Mucosa of descending colon (tissue), 3 donors: ENCODE measurements at regions of chr12 and their contacts with region 1.

Region 1: GRCh38 chr12:4763549-4763948 is 43.3 kb downstream of the GALNT8 start:
- DNase-seq: peak in 2 of 3 donors; percentile 62 to 67
- ATAC-seq: peak; percentile 84
- H3K4me3 ChIP-seq: no peak overlapping the region
- H3K4me1 ChIP-seq: no peaks in the 10 kb centered on the region
- CTCF ChIP-seq: no peak

Region 2: GRCh38 chr12:4579305-4580102 is 184.0 kb before region 1 on chr12:
- intact Hi-C with region 1: loop called in 1 of 2 experiments (anchors 1 kb)
- DNase-seq: peak in 1 of 3 donors; percentile 58
- ATAC-seq: peak; percentile 89
- H3K4me3 ChIP-seq: no peak overlapping the region
- H3K4me1 ChIP-seq: no peaks in the 10 kb centered on the region
- CTCF ChIP-seq: no peak

Region 3: GRCh38 chr12:4604684-4605193 is 158.8 kb before region 1 on chr12:
- intact Hi-C with region 1: loop called in 1 of 2 experiments (anchors 10 kb)
- DNase-seq: peak; percentile 78 to 88 (median 87)
- ATAC-seq: peak; percentile 100
- H3K4me3 ChIP-seq: peak overlapping the region; percentile 50
- H3K4me1 ChIP-seq: peaks cover 3% of the 10 kb centered on the region
- CTCF ChIP-seq: peak; percentile 98